ENCODE measurements at regions of chr6 and their contacts with region 1.

Region 1: GRCh38 chr6:13395272-13396237 is 67.2 kb upstream of the TBC1D7 start:
- DNase-seq: no peak
- ATAC-seq: peak; percentile 65
- H3K4me3 ChIP-seq: no peak overlapping the region; the same call in 1 of the 2 replicates
- H3K27ac ChIP-seq: peak overlapping the region; percentile 76
- H3K4me1 ChIP-seq: peaks cover 38% of the 10 kb centered on the region
- H3K27me3 ChIP-seq: no peaks in the 10 kb centered on the region
- CTCF ChIP-seq: no peak
- EP300 ChIP-seq: 0 out of 4 replicates have a peak, but pooled peaks of 1 of the 2 experiments have one; percentile 45
- POLR2A ChIP-seq: no peak
- RAD21 ChIP-seq: no peak

Region 2: DNA sequence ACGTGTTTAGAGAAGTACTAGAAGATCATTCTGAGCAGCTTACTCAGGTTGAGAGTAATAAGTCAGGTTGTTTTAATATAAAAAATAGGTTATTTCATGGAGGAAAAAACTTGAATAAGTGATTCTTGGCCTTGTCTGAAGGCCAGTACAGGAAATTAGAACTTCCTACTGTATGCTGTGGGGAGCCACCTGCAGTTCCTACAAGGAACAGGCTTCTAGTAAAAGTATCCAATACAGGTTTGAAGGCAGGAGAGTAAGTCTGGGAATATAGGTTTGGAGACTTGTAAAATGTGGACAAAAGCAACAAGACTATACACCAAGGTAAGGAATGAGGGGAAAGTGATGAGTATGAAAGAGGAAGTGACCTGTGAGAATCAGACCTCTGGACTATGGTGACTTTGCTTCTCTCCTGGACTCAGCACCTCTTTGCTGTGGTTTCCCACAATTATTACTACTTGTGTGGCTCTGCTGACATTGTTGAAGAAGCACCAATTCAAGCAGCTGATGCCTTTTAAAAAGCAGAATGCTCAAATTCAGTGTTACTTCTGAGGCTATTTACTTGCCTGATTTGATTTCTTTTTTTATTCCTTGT is 345.8 kb before region 1 on chr6:
- CTCF ChIA-PET with region 1: no interaction called
- POLR2A ChIA-PET with region 1: no interaction called
- RAD21 ChIA-PET with region 1: no interaction called
- SMC1A ChIA-PET with region 1: no interaction called
- in situ Hi-C with region 1: no loop called
- intact Hi-C with region 1: no loop called
- DNase-seq: no peak
- ATAC-seq: 0 out of 3 replicates have a peak, but pooled peaks have one; percentile 15
- H3K4me3 ChIP-seq: no peak overlapping the region
- H3K27ac ChIP-seq: no peak overlapping the region
- H3K4me1 ChIP-seq: no peaks in the 10 kb centered on the region
- H3K27me3 ChIP-seq: peaks cover 0 to 4% of the 10 kb centered on the region in 2 experiments; a peak in 2 of 4 replicates
- CTCF ChIP-seq: no peak
- EP300 ChIP-seq: no peak
- POLR2A ChIP-seq: no peak
- RAD21 ChIP-seq: no peak

Region 3: DNA sequence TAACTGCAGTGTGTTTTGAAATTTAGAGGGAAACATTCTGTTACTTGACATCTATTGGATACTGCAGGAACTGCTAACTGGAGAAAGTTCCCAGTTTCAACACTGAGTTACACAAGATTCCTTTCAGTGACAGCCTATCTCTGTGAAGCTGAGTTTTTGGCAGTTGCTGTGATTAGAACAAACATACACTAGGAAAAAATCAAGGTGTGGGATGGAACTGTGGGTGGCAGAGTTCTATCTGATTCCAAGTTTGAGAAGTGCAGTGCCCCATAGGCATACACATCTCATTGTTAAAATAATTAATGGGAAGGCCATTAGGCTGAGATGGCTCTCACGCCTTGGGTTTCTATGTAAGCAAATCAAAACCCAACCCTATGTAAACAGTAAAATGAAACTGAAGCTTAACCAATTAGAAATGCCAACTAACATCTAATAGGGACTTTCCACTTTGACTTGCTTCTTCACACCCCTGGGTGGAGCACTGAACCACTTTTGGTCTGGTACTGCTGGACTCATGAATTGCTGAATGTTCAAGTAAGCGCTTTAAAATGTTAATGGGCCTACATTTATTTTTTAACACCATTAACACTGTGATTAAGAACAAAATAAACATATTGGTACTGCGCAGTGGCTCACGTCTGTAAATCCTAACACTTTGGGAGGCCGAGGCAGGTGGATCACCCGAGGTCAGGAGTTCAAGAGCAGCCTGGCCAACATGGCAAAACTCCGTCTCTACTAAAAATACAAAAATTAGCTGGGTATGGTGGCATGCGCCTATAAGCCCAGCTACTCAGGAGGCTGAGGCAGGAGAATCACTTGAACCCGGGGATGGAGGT is 12.0 kb before region 1 on chr6:
- CTCF ChIA-PET with region 1: interaction called, 59 read pairs
- POLR2A ChIA-PET with region 1: interaction called, 22 read pairs
- RAD21 ChIA-PET with region 1: interaction called, 16 read pairs
- SMC1A ChIA-PET with region 1: interaction called, 53 read pairs
- in situ Hi-C with region 1: no loop called
- intact Hi-C with region 1: no loop called
- DNase-seq: peak; percentile 91
- ATAC-seq: peak; percentile 98
- H3K4me3 ChIP-seq: no peak overlapping the region
- H3K27ac ChIP-seq: peak overlapping the region; percentile 93
- H3K4me1 ChIP-seq: peaks cover 45% of the 10 kb centered on the region
- H3K27me3 ChIP-seq: no peaks in the 10 kb centered on the region
- CTCF ChIP-seq: peak; percentile 40 to 67 (median 48); a peak in 5 of 6 replicates
- EP300 ChIP-seq: peak in 1 of 2 experiments; percentile 54; a peak in 2 of 4 replicates
- POLR2A ChIP-seq: no peak
- RAD21 ChIP-seq: peak; percentile 83

Region 4: GRCh38 chr6:13407709-13408695 is 12.4 kb after region 1 on chr6:
- CTCF ChIA-PET with region 1: interaction called, 7 read pairs
- POLR2A ChIA-PET with region 1: interaction called, 3 read pairs
- RAD21 ChIA-PET with region 1: interaction called, 4 read pairs
- SMC1A ChIA-PET with region 1: interaction called, 11 read pairs
- in situ Hi-C with region 1: no loop called
- intact Hi-C with region 1: no loop called
- DNase-seq: no peak
- ATAC-seq: no peak
- H3K4me3 ChIP-seq: no peak overlapping the region
- H3K27ac ChIP-seq: no peak overlapping the region
- H3K4me1 ChIP-seq: no peaks in the 10 kb centered on the region
- H3K27me3 ChIP-seq: no peaks in the 10 kb centered on the region
- CTCF ChIP-seq: no peak
- EP300 ChIP-seq: no peak
- POLR2A ChIP-seq: no peak
- RAD21 ChIP-seq: no peak

Measured in GM12878 (cell line).